ENCODE measurements at regions of chr4 and their contacts with region 1.

Region 1: DNA sequence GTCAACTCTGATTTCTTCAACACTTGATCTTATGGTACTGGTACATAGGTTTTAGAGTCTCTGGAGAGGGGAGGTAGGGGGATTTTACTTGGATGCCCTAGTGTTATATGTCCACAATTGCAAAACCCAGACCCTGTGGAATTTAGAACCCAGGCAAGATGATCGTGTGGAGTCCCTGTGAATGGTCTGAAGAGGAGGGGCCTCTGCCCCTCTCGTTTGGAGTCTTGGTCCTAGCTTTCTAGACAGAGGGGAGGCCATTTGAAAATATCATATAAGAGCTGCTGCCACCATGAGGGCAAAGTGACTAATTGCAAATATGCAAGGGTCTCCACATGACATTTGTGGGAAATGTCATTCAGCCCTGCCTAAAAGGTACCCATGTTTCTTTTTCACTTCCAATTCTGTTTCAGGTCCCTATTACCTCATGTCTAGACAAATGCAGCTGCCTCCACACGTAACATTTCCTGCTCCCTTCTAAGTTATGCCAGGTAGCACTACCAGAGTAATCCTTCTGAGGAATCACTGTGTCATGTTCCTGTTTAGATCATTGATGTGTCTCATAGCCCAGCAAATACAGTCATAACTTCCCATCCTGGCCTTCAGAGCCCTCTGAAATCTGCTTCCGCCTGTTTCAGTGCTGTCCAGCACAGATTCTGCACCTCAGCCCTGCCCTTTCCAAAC is 126.8 kb downstream of the KLHL8 start:
- DNase-seq: peak in 30 of 42 donors; percentile 25 to 82 (median 52)

Region 2: DNA sequence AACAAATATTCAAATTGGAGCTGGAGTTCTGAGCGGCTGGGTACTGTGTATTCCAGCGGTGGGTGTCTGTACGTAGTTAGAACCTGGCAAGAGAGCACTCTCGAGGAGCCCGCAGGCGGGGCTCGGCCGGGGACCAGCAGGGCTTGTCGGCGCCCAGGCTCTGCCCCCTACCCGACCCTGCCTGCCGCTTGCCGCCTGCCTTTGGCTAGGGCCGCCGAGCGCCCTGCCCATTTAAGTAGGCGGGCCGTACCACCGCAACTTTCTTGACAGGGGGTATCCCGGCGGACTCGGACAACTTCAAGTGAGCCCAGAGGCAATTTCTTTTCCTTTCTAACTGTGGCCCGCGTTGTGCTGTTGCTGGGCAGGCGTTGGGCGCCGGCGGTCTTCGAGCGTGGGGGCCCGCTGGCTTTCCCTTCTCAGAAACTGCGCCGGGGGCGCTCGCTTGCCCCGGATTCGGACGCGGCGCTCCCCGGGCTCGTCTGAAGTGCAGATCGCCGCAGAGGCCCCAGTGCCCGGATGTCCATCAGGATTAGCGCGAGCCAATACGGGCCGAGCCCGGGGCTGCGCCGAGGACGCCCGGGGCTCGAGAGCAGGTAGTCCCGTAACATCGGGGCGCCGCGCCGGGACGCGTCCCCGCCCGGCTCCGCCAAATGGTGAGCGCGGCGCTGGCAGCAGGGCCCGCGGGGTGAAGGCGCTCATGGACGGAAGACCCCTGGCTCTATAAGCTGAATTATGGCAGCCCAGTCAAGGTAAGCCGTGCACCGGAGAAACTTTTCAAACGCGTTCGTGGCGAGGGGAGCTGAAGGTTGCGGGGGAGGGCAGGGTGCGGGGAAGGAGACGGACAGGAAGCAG is 86.7 kb before region 1 on chr4:
- intact Hi-C with region 1: loop called (anchors 5 kb)
- DNase-seq: peak; percentile 82 to 96 (median 91)